ENCODE measurements at regions of chr1 and their contacts with region 1.

Region 1: GRCh38 chr1:151762941-151763921 is at the start of gene MRPL9:
- DNase-seq: peak; percentile 89
- H3K4me3 Mint-ChIP-seq: peak within 1 kb of the TSS; percentile 77
- H3K27ac Mint-ChIP-seq: peak within 1 kb of the TSS; percentile 79
- H3K4me1 Mint-ChIP-seq: peaks cover 43% of the 10 kb centered on the region
- H3K27me3 Mint-ChIP-seq: no peaks in the 10 kb centered on the region
- total RNA-seq, gene MRPL9: 97.9 to 98.9 TPM

Region 2: GRCh38 chr1:151710187-151710840 is 52.9 kb before region 1 on chr1:
- CTCF ChIA-PET with region 1: no interaction called
- POLR2A ChIA-PET with region 1: no interaction called
- DNase-seq: peak; percentile 33
- H3K4me3 Mint-ChIP-seq: no peak overlapping the region
- H3K27ac Mint-ChIP-seq: no peak overlapping the region
- H3K4me1 Mint-ChIP-seq: peaks cover 6% of the 10 kb centered on the region
- H3K27me3 Mint-ChIP-seq: peaks cover 9% of the 10 kb centered on the region

Region 3: GRCh38 chr1:151773702-151774101 is 10.5 kb after region 1 on chr1:
- CTCF ChIA-PET with region 1: interaction called, 4 read pairs
- POLR2A ChIA-PET with region 1: interaction called, 10 read pairs
- DNase-seq: no peak
- H3K4me3 Mint-ChIP-seq: no peak overlapping the region
- H3K27ac Mint-ChIP-seq: no peak overlapping the region
- H3K4me1 Mint-ChIP-seq: peaks cover 1% of the 10 kb centered on the region
- H3K27me3 Mint-ChIP-seq: no peaks in the 10 kb centered on the region

Region 4: GRCh38 chr1:151790071-151790940 is 27.1 kb after region 1 on chr1 and contains the start of gene TDRKH:
- CTCF ChIA-PET with region 1: interaction called, 4 read pairs
- POLR2A ChIA-PET with region 1: interaction called, 16 read pairs
- DNase-seq: peak; percentile 99
- H3K4me3 Mint-ChIP-seq: peak within 1 kb of the TSS; percentile 88
- H3K27ac Mint-ChIP-seq: peak within 1 kb of the TSS; percentile 66
- H3K4me1 Mint-ChIP-seq: peaks cover 28% of the 10 kb centered on the region
- H3K27me3 Mint-ChIP-seq: no peaks in the 10 kb centered on the region
- total RNA-seq, gene TDRKH: 27.1 to 30.9 TPM

Region 5: DNA sequence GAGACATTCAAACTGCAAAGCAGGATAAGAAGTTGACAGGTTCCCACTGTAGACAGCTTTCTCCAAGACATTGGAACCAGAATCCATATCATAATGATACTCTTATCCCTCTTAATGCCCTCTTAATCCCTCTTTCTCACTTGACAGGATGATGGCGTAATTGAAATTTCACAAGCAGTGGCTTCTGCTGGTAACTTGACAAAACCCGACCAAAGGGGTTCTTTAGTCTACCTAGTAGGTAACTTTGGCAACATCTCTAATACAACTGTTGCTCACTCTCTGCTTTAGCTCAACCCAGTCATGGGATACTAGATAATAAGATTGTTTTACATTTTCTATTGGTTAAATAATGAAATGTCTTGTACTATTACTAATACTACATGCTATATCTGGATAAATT is 195.7 kb after region 1 on chr1:
- CTCF ChIA-PET with region 1: no interaction called
- POLR2A ChIA-PET with region 1: no interaction called
- DNase-seq: no peak
- H3K4me3 Mint-ChIP-seq: no peak overlapping the region
- H3K27ac Mint-ChIP-seq: no peak overlapping the region
- H3K4me1 Mint-ChIP-seq: peaks cover 6% of the 10 kb centered on the region
- H3K27me3 Mint-ChIP-seq: no peaks in the 10 kb centered on the region

Measured in activated CD4-positive, alpha-beta memory T cell treated with anti-CD3 and anti-CD28 coated beads, Interleukin-2, amount 10 ng/mL, durations not matched to agents 7 days and 5 days (primary cell).